PC-3 (cell line): ENCODE measurements at regions of chr5 and their contacts with region 1.

Region 1: DNA sequence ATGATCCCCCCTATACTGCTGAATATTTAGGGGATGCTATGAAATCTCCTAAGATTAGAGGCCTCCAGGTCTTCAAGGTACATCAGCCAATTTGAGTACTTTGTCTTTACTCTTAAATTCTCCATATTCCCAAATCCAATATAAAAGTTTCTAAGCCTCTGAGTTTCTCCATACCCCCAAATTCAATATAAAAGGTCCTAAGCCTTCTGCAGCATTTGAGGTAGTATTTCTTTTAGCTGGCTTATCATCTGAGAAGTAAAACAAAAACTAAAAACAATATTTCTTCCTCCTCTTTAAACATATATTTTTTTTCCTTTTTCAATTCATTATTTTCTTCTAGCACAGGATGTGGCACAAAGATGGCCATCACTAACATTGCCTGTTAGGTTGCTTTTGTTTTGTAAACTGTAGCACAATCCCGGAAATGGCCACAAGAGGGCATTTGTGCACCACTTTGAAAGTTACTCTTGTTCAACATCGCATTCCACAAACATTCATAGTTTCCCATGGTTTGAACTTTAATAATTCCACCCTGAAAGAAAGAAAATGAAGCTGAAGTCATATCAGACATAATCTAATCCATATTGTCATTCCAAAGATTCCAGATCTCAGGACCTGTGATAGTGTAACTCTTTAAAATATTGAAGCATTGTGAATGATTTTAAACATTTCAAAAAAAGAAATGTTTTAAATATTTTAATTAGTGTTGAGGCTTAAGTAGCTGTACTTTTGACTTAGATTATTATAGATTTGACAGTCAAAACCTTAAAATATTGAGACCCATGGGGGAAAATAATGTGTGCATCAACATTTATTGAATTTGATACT is 21.0 kb upstream of the SCGB3A2 start:
- DNase-seq: peak; percentile 95
- ATAC-seq: peak; percentile 79
- H3K4me3 ChIP-seq: no peak overlapping the region
- H3K27ac ChIP-seq: no peak overlapping the region
- H3K4me1 ChIP-seq: peaks cover 18% of the 10 kb centered on the region
- H3K27me3 ChIP-seq: no peaks in the 10 kb centered on the region
- CTCF ChIP-seq: peak; percentile 98

Region 2: DNA sequence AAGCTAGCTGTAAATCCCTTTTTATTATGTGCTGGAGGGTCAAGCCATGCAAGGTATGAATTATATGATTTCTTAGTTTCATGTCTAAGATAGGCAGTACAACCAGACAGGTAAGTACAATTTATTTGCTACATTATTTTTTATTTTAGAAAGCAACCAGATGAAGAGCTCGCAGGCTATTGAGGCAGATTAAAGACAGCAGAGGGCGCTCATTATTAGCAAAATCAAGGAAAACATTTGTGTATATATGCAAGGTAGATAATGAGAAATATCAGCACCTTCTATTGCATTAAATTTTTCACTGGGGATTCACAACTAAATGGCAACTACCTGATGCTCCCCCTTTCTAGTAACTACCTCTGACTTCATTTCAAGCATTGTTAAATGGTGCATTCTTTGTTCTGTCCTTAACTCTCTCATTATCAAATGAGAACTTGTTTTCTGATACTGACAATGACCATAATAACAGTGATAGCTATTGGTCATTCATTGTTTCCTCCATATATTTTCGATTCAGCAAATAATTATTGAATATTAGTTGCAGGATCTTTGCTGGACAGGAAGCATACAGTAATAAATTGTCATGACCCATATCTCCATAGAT is 29.6 kb after region 1 on chr5:
- CTCF ChIA-PET with region 1: interaction called, 20 read pairs
- POLR2A ChIA-PET with region 1: no interaction called
- intact Hi-C with region 1: loop called (anchors 1 kb)
- DNase-seq: peak; percentile 80
- ATAC-seq: peak; percentile 63
- H3K4me3 ChIP-seq: no peak overlapping the region
- H3K27ac ChIP-seq: peak overlapping the region; percentile 97
- H3K4me1 ChIP-seq: peaks cover 51% of the 10 kb centered on the region
- H3K27me3 ChIP-seq: no peaks in the 10 kb centered on the region
- CTCF ChIP-seq: peak; percentile 96

Region 3: GRCh38 chr5:148120317-148120716 is 262.8 kb after region 1 on chr5:
- CTCF ChIA-PET with region 1: no interaction called
- POLR2A ChIA-PET with region 1: no interaction called
- intact Hi-C with region 1: loop called (anchors 5 kb)
- DNase-seq: peak; percentile 50
- ATAC-seq: peak; percentile 60
- H3K4me3 ChIP-seq: 0 out of 2 replicates have a peak overlapping the region, but pooled peaks have one; percentile 20
- H3K27ac ChIP-seq: no peak overlapping the region
- H3K4me1 ChIP-seq: peaks cover 6% of the 10 kb centered on the region
- H3K27me3 ChIP-seq: no peaks in the 10 kb centered on the region
- CTCF ChIP-seq: no peak